PC-3 (cell line): ENCODE measurements at regions of chr9 and their contacts with region 1.

Region 1: GRCh38 chr9:97109194-97109811 is 70.4 kb upstream of the CTSV start:
- DNase-seq: peak; percentile 75
- ATAC-seq: peak; percentile 80
- H3K4me3 ChIP-seq: no peak overlapping the region
- H3K27ac ChIP-seq: no peak overlapping the region
- H3K4me1 ChIP-seq: peaks cover 20% of the 10 kb centered on the region
- H3K27me3 ChIP-seq: no peaks in the 10 kb centered on the region
- CTCF ChIP-seq: peak; percentile 78

Region 2: GRCh38 chr9:96854073-96854876 is 255.0 kb before region 1 on chr9 and contains the start of gene ZNF782:
- CTCF ChIA-PET with region 1: no interaction called
- POLR2A ChIA-PET with region 1: no interaction called
- intact Hi-C with region 1: loop called (anchors 1 kb)
- DNase-seq: peak; percentile 91
- ATAC-seq: peak; percentile 70
- H3K4me3 ChIP-seq: peak within 1 kb of the TSS; percentile 91
- H3K27ac ChIP-seq: no peak within 1 kb of the TSS
- H3K4me1 ChIP-seq: peaks cover 40% of the 10 kb centered on the region
- H3K27me3 ChIP-seq: no peaks in the 10 kb centered on the region
- CTCF ChIP-seq: no peak
- total RNA-seq, gene ZNF782: 5.0 and 5.3 TPM in 2 replicates

Region 3: GRCh38 chr9:96875461-96876364 is 233.6 kb before region 1 on chr9:
- CTCF ChIA-PET with region 1: no interaction called
- POLR2A ChIA-PET with region 1: no interaction called
- intact Hi-C with region 1: loop called (anchors 5 kb)
- DNase-seq: peak; percentile 72
- ATAC-seq: peak; percentile 89
- H3K4me3 ChIP-seq: peak overlapping the region; percentile 74
- H3K27ac ChIP-seq: peak overlapping the region; percentile 84
- H3K4me1 ChIP-seq: peaks cover 11% of the 10 kb centered on the region; the same call in 1 of the 2 replicates
- H3K27me3 ChIP-seq: no peaks in the 10 kb centered on the region
- CTCF ChIP-seq: peak; percentile 35; the same call in 1 of the 2 replicates

Region 4: DNA sequence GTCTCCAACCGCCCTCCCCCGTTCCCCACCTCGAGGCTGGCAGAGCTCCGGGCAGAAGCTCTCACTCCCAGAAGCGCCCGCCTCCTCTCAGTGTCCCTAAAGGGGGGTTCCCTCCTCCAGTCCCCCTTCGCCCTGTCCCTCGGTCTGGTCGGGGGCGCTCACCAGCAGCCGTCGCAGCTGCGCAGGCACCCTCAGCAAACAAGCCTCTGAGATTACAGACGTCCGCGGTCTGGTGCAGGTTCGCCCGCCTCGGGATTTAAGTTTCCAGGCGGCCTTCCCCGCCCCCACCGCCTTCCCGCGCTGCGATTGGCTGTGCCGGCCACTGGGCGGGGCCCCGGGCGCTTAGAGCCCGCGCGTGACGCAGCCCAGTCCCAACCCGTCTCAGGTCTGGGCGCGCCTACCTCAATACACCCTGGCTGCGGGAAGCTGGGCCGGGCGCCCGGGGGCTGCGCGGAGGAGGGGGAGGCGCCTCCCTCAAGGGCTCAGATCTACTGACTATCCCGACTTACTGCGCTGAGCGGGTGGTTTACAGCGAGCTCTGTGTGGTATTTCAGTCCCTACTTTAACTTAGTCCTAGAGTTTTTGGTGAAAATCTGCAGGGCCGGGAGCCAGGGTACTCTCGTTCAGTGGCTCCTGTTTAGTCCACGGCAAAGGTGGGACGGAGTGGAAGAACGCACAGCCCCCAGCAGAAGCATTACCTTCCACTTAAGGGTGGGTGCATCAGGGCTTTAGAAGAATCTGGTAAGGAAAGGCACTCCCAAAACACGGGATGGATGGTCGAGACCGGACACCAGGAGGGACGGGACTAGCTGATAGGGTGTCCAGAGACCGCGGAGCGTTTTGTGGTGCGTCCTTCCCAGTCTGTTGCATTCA is 70.2 kb before region 1 on chr9 and contains the start of gene CTSV:
- CTCF ChIA-PET with region 1: no interaction called
- POLR2A ChIA-PET with region 1: interaction called, 3 read pairs
- intact Hi-C with region 1: loop called (anchors 5 kb)
- DNase-seq: peak; percentile 89
- ATAC-seq: peak; percentile 95
- H3K4me3 ChIP-seq: peak within 1 kb of the TSS; percentile 92
- H3K27ac ChIP-seq: peak within 1 kb of the TSS; percentile 69
- H3K4me1 ChIP-seq: peaks cover 17% of the 10 kb centered on the region
- H3K27me3 ChIP-seq: no peaks in the 10 kb centered on the region
- CTCF ChIP-seq: no peak
- total RNA-seq, gene CTSV: 11.4 and 12.2 TPM in 2 replicates

Region 5: GRCh38 chr9:97062417-97062985 is 46.8 kb before region 1 on chr9:
- CTCF ChIA-PET with region 1: no interaction called
- POLR2A ChIA-PET with region 1: no interaction called
- intact Hi-C with region 1: loop called (anchors 5 kb)
- DNase-seq: peak; percentile 95
- ATAC-seq: peak; percentile 81
- H3K4me3 ChIP-seq: no peak overlapping the region
- H3K27ac ChIP-seq: peak overlapping the region; percentile 91
- H3K4me1 ChIP-seq: peaks cover 31% of the 10 kb centered on the region
- H3K27me3 ChIP-seq: no peaks in the 10 kb centered on the region
- CTCF ChIP-seq: no peak